Ascending aorta (tissue), 2 donors: ENCODE measurements at regions of chr2 and their contacts with region 1.

Region 1: GRCh38 chr2:101558740-101559519 is 84.0 kb upstream of the RFX8 start:
- DNase-seq: no peak
- H3K4me3 ChIP-seq: peak overlapping the region; percentile 16 to 31
- H3K27ac ChIP-seq: peak overlapping the region; percentile 81 to 86
- H3K4me1 ChIP-seq: peaks cover 4 to 15% of the 10 kb centered on the region in 2 donors
- H3K27me3 ChIP-seq: no peaks in the 10 kb centered on the region
- CTCF ChIP-seq: no peak

Region 2: DNA sequence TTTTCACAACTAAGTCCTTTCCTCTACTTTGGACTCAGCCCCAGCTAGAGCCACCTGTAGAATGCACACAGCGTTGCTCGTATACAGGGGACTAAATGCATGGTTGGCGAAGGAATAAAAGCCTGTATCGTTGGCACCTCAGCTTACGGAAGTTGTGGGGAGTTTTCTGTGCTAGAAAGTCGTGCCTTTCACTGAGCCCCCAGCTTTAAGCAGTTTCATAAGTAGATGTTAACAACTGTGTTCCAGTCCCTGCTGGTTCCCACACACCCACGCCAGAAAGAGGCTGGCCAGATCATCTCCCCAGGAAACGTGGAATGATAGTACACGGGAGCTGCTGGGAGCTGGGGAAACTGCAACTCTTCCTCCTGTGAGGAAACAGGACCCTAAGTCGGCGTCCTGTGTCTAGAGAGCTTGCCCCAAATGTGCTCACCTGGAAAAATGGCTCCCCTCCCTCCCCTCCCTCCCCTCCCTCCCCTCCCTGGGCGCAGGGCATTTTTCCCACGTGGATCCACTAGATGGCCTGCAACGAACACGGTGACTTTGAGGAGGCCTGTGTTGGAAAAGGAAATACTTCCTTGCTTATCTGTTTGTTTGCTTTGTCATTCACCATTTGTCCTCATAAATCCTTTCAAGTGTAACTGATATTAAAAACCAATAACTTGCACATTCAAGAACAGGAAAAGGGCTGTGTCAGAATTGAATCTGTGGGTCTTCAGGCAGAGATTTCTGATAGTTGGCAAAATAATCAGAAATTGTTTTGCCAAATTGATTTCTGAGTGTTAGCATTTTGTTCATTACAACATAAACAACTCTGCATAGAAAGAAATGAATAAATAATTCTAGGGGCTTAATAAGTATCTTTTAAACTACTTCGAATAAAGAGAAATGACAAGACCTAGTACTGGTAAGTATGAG is 40.1 kb before region 1 on chr2:
- intact Hi-C with region 1: loop called (anchors 5 kb)
- DNase-seq: no peak
- H3K4me3 ChIP-seq: no peak overlapping the region
- H3K27ac ChIP-seq: no peak overlapping the region
- H3K4me1 ChIP-seq: peaks cover 0 to 13% of the 10 kb centered on the region in 2 donors
- H3K27me3 ChIP-seq: no peaks in the 10 kb centered on the region
- CTCF ChIP-seq: peak in 1 of 3 experiments; percentile 56

Region 3: GRCh38 chr2:101533561-101534148 is 25.3 kb before region 1 on chr2:
- intact Hi-C with region 1: loop called (anchors 2 kb)
- DNase-seq: no peak
- H3K4me3 ChIP-seq: peak overlapping the region in 1 of 2 donors; percentile 31
- H3K27ac ChIP-seq: peak overlapping the region; percentile 86 to 89
- H3K4me1 ChIP-seq: peaks cover 0 to 5% of the 10 kb centered on the region in 2 donors
- H3K27me3 ChIP-seq: no peaks in the 10 kb centered on the region
- CTCF ChIP-seq: no peak

Region 4: DNA sequence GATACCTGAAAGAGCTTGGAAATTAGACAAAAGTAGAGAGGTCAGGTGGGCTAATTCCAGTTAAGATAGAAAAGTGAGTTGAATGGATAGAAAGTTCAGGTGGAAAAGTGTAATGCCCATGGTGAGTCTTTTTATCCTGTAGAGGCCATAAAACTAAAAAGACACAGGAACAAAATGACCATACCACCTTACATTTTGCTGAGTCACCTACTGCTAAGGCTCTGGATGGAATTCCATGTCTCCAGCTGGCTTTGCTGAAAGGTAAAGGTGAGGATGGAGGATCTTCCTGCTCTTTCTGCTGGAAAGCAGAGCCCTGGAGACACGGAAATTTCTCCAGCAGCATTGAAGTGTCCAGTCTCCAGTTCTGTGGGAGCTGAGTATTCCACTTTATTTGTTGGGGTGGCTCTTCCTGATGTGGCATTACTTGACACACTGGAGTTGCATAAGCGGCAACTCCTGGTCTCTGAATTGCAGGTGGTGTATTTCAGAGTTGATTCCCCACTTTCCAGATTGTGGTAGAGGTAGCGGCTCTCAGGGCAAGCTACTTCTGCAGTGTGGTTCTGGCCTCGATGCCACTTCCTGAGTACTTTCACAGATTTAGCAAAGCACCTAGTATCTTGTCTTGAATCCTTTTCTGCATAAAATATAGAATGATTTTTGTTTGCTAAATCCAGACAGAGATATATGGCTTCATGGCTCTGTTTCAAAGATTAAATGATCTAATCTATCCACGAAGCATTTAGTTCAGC is 638.6 kb after region 1 on chr2:
- intact Hi-C with region 1: no loop called
- DNase-seq: no peak
- H3K4me3 ChIP-seq: no peak overlapping the region
- H3K27ac ChIP-seq: no peak overlapping the region
- H3K4me1 ChIP-seq: no peaks in the 10 kb centered on the region
- H3K27me3 ChIP-seq: no peaks in the 10 kb centered on the region
- CTCF ChIP-seq: no peak